Activated CD8-positive, alpha-beta T cell treated with anti-CD3 and anti-CD28 coated beads, Interleukin-2, amount 10 ng/mL, durations not matched to agents 7 days and 5 days (primary cell): ENCODE measurements at regions of chr7 and their contacts with region 1.

Region 1: GRCh38 chr7:30062591-30062990 is 34.4 kb downstream of the PLEKHA8 start:
- DNase-seq: no peak
- ATAC-seq: peak; percentile 62
- H3K4me3 Mint-ChIP-seq: no peak overlapping the region
- H3K27ac Mint-ChIP-seq: no peak overlapping the region
- H3K4me1 Mint-ChIP-seq: peaks cover 8% of the 10 kb centered on the region
- H3K27me3 Mint-ChIP-seq: no peaks in the 10 kb centered on the region

Region 2: DNA sequence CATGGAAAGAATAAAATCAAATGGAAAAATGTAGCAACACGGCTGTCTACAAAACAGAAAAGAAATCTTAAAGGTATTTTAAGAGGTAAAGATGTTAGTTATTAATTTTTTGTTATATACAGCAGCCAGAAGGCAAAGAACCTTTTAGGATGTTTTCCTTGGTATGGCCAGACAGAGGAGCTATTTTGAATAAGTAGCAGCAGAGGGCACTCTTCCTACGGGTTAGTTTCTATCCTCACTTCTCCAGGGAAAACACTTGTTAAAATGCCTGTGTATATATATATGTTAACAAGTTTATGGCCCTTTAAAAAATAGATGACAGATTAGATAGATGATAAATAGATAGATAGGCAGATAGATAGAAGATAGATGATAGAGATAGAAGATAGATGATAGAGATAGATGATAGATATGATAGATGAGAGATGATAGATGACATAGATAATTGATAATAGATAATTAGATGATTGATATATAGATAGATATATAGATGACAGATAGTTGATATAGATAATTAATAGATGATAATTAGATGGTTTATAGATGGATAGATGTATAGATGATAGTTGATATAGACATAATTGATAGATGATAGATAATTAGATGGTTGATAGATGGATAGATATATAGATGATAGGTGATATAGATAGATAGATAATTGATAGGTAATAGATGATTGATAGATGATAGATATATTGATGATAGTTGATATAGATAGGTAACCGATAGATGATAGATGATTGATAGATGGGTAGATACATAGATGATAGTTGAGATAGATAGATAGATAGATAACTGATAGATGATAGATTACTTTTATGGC is 314.1 kb before region 1 on chr7:
- CTCF ChIA-PET with region 1: interaction called, 10 read pairs
- POLR2A ChIA-PET with region 1: no interaction called
- DNase-seq: no peak
- ATAC-seq: no peak
- H3K4me3 Mint-ChIP-seq: no peak overlapping the region
- H3K27ac Mint-ChIP-seq: no peak overlapping the region
- H3K4me1 Mint-ChIP-seq: no peaks in the 10 kb centered on the region
- H3K27me3 Mint-ChIP-seq: no peaks in the 10 kb centered on the region

Region 3: DNA sequence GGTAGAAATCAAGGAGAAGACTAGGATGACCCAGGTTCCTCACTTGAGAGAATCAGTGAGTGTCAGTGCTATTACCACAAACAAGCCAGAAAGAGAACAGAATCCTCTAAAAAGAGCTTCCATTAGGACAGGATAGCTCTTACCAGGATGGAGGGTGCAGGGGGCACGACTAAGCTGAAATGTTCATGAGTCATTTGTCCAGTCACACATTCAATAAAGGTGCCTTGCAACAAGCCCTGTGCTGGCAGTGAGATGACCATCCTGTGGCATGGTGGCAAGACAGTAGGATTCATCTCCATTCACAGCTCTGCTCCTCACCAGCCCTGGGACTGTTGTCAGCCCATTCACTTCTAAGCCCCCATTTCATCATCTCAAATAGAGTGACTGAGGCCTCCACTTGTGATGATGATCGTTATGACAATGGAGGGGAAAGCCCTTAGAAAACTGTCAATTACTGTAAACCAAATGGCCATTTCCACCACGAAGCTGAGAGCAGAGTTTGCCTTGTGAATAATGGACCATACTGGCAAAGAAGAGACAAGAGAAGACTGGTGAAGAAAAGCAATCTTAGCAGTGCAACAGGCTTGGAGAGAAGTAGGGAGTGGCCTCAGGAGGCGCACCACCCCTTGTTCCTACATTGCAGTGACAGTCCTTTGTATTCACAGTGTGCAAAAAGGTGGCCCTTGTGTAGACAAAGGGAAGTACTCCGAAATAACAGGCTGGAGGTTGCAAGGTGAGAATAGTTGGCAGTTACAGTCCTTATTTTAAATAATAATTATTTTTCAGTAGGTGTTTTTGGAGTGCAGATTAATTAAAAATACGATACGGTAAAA is 265.3 kb before region 1 on chr7:
- CTCF ChIA-PET with region 1: no interaction called
- POLR2A ChIA-PET with region 1: no interaction called
- DNase-seq: no peak
- ATAC-seq: no peak
- H3K4me3 Mint-ChIP-seq: no peak overlapping the region
- H3K27ac Mint-ChIP-seq: no peak overlapping the region
- H3K4me1 Mint-ChIP-seq: no peaks in the 10 kb centered on the region
- H3K27me3 Mint-ChIP-seq: peaks cover 41% of the 10 kb centered on the region

Region 4: GRCh38 chr7:29921404-29922010 is 141.1 kb before region 1 on chr7:
- CTCF ChIA-PET with region 1: interaction called, 22 read pairs
- POLR2A ChIA-PET with region 1: no interaction called
- DNase-seq: peak; percentile 59
- ATAC-seq: peak; percentile 91
- H3K4me3 Mint-ChIP-seq: no peak overlapping the region
- H3K27ac Mint-ChIP-seq: no peak overlapping the region
- H3K4me1 Mint-ChIP-seq: no peaks in the 10 kb centered on the region
- H3K27me3 Mint-ChIP-seq: no peaks in the 10 kb centered on the region

Region 5: GRCh38 chr7:29998489-29998888 is 64.1 kb before region 1 on chr7:
- CTCF ChIA-PET with region 1: no interaction called
- POLR2A ChIA-PET with region 1: no interaction called
- DNase-seq: no peak
- ATAC-seq: no peak
- H3K4me3 Mint-ChIP-seq: no peak overlapping the region
- H3K27ac Mint-ChIP-seq: no peak overlapping the region
- H3K4me1 Mint-ChIP-seq: no peaks in the 10 kb centered on the region
- H3K27me3 Mint-ChIP-seq: peaks cover 18% of the 10 kb centered on the region

Region 6: DNA sequence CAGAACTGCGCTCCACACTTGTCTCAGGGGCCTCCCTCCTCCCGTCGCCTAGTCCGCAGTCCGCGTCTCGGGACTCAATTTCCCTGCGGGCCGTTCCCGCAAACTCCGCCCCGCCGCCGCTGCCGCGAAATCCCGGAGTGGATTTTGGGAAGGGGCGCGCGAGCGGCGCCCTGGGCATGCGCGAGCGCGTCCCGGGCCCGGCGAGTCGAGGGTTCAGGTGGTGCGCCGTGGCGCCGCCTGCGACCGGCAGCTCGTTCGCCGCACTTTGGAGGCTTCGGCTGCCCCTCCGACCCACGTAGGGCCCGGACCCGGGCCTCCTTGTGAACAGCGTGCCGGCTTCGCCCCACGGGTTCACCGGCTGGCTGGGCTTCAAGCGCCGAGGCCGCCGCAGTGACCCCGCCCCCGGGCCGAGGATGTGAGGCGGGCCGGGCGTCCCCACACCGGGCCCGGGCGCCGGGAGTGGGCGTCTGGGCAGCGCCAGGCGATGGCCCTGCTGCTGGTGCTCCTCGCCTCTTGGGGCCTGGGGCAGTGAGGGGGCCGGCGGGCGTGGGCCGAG is 34.3 kb before region 1 on chr7 and contains the start of gene PLEKHA8:
- CTCF ChIA-PET with region 1: interaction called, 42 read pairs
- POLR2A ChIA-PET with region 1: interaction called, 4 read pairs
- DNase-seq: peak; percentile 87
- ATAC-seq: peak; percentile 59
- H3K4me3 Mint-ChIP-seq: peak within 1 kb of the TSS; percentile 86
- H3K27ac Mint-ChIP-seq: peak within 1 kb of the TSS; percentile 86
- H3K4me1 Mint-ChIP-seq: peaks cover 33% of the 10 kb centered on the region
- H3K27me3 Mint-ChIP-seq: no peaks in the 10 kb centered on the region
- total RNA-seq, gene PLEKHA8: 8.9 to 11.5 TPM

Region 7: GRCh38 chr7:30047124-30047523 is 15.5 kb before region 1 on chr7:
- CTCF ChIA-PET with region 1: interaction called, 33 read pairs
- POLR2A ChIA-PET with region 1: no interaction called
- DNase-seq: no peak
- ATAC-seq: no peak
- H3K4me3 Mint-ChIP-seq: no peak overlapping the region
- H3K27ac Mint-ChIP-seq: no peak overlapping the region
- H3K4me1 Mint-ChIP-seq: peaks cover 7% of the 10 kb centered on the region
- H3K27me3 Mint-ChIP-seq: no peaks in the 10 kb centered on the region

Region 8: GRCh38 chr7:30080818-30081217 is 18.2 kb after region 1 on chr7:
- CTCF ChIA-PET with region 1: interaction called, 23 read pairs
- POLR2A ChIA-PET with region 1: interaction called, 3 read pairs
- DNase-seq: no peak
- ATAC-seq: no peak
- H3K4me3 Mint-ChIP-seq: no peak overlapping the region
- H3K27ac Mint-ChIP-seq: no peak overlapping the region
- H3K4me1 Mint-ChIP-seq: peaks cover 4% of the 10 kb centered on the region
- H3K27me3 Mint-ChIP-seq: no peaks in the 10 kb centered on the region